Vagina (tissue), 2 donors: ENCODE measurements at regions of chr1 and their contacts with region 1.

Region 1: DNA sequence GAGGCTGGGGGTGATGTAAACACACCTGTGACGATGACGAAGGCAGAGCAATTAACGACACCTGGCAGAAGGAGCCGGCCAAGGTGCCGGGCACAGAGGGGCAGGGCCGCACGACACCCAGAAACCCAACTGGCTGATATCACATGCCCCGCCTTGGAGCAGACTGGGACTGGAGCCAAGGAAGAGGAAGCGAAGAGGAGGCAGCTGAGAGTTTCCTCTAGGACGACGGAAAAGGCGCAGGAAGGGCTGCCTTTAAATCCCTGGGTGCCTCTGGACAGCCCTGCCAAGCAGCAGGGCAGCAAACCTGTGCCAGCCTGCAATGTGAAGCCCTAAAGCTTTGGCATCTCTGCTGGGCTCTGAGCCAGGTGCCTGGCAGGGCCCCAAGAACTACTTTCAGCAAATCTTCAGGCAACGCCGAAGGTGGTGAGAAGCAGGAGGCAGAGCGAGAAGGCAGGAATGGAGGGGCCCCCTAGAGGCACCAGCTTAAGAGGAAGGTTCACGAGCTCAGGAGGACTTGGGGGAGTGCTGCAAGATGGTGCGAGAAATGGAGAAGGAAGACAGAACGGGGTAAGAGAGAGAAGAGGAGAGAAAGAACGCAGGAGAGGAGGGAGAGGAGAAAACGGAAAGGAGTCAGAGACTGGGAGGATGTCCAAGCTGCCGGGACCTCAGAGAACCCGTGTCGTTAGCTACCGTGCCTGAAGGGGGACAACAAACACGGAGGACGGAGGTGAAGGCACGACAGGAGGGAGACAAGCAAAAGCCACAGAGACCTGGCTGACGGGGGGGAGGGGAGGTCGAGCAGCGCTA is 25.3 kb upstream of the PEF1 start:
- DNase-seq: no peak
- H3K4me3 ChIP-seq: peak overlapping the region; percentile 12 to 23
- H3K27ac ChIP-seq: peak overlapping the region; percentile 72
- H3K4me1 ChIP-seq: peaks cover 90% of the 10 kb centered on the region
- H3K27me3 ChIP-seq: no peaks in the 10 kb centered on the region
- CTCF ChIP-seq: no peak
- POLR2A ChIP-seq: no peak

Region 2: GRCh38 chr1:31715087-31715872 is 45.3 kb after region 1 on chr1:
- intact Hi-C with region 1: loop called (anchors 5 kb)
- DNase-seq: peak in 1 of 2 donors; percentile 96
- H3K4me3 ChIP-seq: peak overlapping the region; percentile 39 to 58
- H3K27ac ChIP-seq: peak overlapping the region; percentile 90
- H3K4me1 ChIP-seq: peaks cover 46% of the 10 kb centered on the region
- H3K27me3 ChIP-seq: no peaks in the 10 kb centered on the region
- CTCF ChIP-seq: peak; percentile 36 to 81 (median 80)
- POLR2A ChIP-seq: peak in 1 of 2 donors; percentile 64